Activated CD4-positive, alpha-beta T cell treated with anti-CD3 and anti-CD28 coated beads for 36 hours (primary cell): ENCODE measurements at regions of chr19 and their contacts with region 1.

Region 1: DNA sequence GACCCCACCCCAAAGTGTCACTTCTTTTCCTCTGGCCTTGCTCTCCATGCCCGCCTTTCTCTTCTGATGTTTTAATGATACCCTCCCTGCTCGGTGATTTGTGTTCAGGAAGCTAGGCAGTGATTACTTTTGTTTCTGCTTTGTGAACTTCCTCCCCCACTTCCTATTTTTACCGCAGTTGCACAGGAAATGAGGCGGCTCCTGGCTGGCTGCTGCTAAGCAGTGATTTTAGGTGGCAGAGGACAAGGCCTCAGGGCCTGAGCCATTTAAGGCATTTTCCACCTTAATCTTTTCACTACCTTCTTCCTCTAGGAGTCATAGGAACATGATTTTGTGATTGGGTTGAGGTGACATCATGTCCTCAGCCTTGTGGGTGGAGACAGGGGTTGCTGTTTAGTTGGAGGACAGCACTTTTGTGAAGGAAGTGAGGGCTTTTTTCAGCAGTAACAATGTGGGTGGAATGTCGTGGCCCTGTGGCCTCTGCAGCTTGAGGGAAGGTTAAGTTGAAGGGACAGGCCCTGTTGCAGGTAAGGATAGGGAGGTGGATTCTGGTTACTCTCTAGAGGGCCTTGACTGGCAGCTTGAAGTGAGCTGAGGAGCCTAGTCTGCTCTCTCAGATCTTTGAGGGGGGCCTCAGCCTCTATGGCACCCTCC is 15.7 kb downstream of the GARRE1 start:
- DNase-seq: peak; percentile 82
- ATAC-seq: peak; percentile 90
- H3K4me3 Mint-ChIP-seq: peak overlapping the region; percentile 53
- H3K27ac Mint-ChIP-seq: peak overlapping the region; percentile 95
- H3K4me1 Mint-ChIP-seq: peaks cover 72% of the 10 kb centered on the region
- H3K27me3 Mint-ChIP-seq: no peaks in the 10 kb centered on the region

Region 2: DNA sequence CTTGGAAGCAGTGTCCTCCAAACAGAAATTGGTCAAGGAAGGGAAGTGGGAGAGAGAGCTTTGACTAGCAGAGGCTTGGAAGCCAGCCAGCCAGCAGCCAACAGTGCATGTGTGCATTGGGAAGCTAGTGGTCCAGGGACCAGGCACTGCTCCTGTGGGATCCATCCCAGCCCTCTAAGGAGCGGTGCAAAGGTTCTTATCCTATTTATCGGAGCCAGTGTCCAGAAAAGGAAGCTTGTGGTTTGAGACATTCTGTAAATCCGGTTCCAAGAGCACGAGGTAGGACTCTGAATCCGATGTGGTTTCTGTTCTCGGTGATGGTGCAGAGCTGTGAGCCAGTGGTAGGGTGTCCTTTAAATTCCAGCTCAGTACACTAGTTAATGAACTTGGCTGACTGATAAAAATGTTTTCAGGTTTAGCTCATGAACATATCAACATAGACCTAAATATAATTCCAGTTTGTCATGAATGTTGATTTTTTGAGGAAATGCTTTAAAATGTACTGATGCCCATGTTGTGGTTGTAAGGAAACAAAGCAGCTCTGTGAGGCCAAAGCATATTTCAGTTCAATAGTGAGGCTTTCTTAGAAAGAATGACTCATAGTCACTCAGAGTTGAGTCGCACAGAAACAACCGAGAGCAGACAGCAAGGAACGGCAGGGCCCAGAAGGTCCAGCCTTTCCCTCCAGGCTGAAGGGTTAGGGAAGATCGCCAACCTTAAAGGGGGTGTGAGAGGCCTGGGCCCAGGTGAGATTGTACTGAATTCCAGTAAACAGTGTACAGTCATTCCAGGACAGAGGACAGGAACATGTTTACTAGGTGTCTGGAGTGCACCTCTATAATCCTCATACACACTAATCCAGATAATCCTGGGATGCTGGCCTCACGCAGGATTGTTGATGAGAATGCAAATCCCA is 37.3 kb before region 1 on chr19:
- CTCF ChIA-PET with region 1: no interaction called
- POLR2A ChIA-PET with region 1: interaction called, 3 read pairs
- intact Hi-C with region 1: loop called in 1 of 2 experiments (anchors 2 kb)
- DNase-seq: peak; percentile 53
- ATAC-seq: peak; percentile 87
- H3K4me3 Mint-ChIP-seq: no peak overlapping the region
- H3K27ac Mint-ChIP-seq: peak overlapping the region; percentile 80
- H3K4me1 Mint-ChIP-seq: peaks cover 31% of the 10 kb centered on the region
- H3K27me3 Mint-ChIP-seq: no peaks in the 10 kb centered on the region

Region 3: GRCh38 chr19:34253699-34254551 is 16.2 kb before region 1 on chr19:
- CTCF ChIA-PET with region 1: interaction called, 3 read pairs
- POLR2A ChIA-PET with region 1: interaction called, 4 read pairs
- intact Hi-C with region 1: loop called (anchors 1 to 2 kb)
- DNase-seq: no peak
- ATAC-seq: peak; percentile 24
- H3K4me3 Mint-ChIP-seq: peak overlapping the region; percentile 81
- H3K27ac Mint-ChIP-seq: peak overlapping the region; percentile 98
- H3K4me1 Mint-ChIP-seq: peaks cover 30% of the 10 kb centered on the region
- H3K27me3 Mint-ChIP-seq: no peaks in the 10 kb centered on the region

Region 4: GRCh38 chr19:34288381-34288780 is 18.3 kb after region 1 on chr19:
- CTCF ChIA-PET with region 1: interaction called, 5 read pairs
- POLR2A ChIA-PET with region 1: no interaction called
- intact Hi-C with region 1: loop called (anchors 1 to 2 kb)
- DNase-seq: peak; percentile 56
- ATAC-seq: peak; percentile 80
- H3K4me3 Mint-ChIP-seq: no peak overlapping the region
- H3K27ac Mint-ChIP-seq: peak overlapping the region; percentile 71
- H3K4me1 Mint-ChIP-seq: peaks cover 24% of the 10 kb centered on the region
- H3K27me3 Mint-ChIP-seq: no peaks in the 10 kb centered on the region

Region 5: GRCh38 chr19:34308381-34309367 is 38.6 kb after region 1 on chr19:
- CTCF ChIA-PET with region 1: no interaction called
- POLR2A ChIA-PET with region 1: no interaction called
- intact Hi-C with region 1: loop called in 1 of 2 experiments (anchors 2 kb)
- DNase-seq: peak; percentile 32
- ATAC-seq: peak; percentile 21
- H3K4me3 Mint-ChIP-seq: peak overlapping the region; percentile 20
- H3K27ac Mint-ChIP-seq: peak overlapping the region; percentile 90
- H3K4me1 Mint-ChIP-seq: peaks cover 69% of the 10 kb centered on the region
- H3K27me3 Mint-ChIP-seq: no peaks in the 10 kb centered on the region

Region 6: GRCh38 chr19:34317311-34317927 is 47.3 kb after region 1 on chr19:
- CTCF ChIA-PET with region 1: interaction called, 3 read pairs
- POLR2A ChIA-PET with region 1: no interaction called
- intact Hi-C with region 1: loop called in 1 of 2 experiments (anchors 5 kb)
- DNase-seq: peak; percentile 38
- ATAC-seq: peak; percentile 78
- H3K4me3 Mint-ChIP-seq: no peak overlapping the region
- H3K27ac Mint-ChIP-seq: peak overlapping the region; percentile 81
- H3K4me1 Mint-ChIP-seq: peaks cover 57% of the 10 kb centered on the region
- H3K27me3 Mint-ChIP-seq: no peaks in the 10 kb centered on the region

Region 7: GRCh38 chr19:34351382-34351826 is 81.3 kb after region 1 on chr19:
- CTCF ChIA-PET with region 1: interaction called, 6 read pairs
- POLR2A ChIA-PET with region 1: no interaction called
- intact Hi-C with region 1: loop called in 1 of 2 experiments (anchors 2 kb)
- DNase-seq: peak; percentile 21
- ATAC-seq: no peak
- H3K4me3 Mint-ChIP-seq: no peak overlapping the region
- H3K27ac Mint-ChIP-seq: peak overlapping the region; percentile 72
- H3K4me1 Mint-ChIP-seq: peaks cover 17% of the 10 kb centered on the region
- H3K27me3 Mint-ChIP-seq: no peaks in the 10 kb centered on the region

Region 8: DNA sequence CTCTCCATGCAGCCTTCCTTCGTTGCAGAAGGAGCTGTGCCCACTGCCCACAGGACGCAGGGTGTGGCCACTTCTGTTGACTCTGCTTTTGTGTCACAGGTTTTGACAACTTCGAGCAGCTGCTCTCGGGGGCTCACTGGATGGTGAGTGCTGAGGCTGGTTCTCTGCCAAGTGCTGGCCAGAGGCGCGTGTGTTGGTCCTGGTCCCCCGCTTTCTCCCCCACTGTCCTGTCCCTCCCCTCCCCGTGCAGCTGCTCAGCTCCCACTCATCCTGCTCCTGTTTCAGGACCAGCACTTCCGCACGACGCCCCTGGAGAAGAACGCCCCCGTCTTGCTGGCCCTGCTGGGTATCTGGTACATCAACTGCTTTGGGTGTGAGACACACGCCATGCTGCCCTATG is 123.5 kb after region 1 on chr19:
- CTCF ChIA-PET with region 1: no interaction called
- POLR2A ChIA-PET with region 1: no interaction called
- intact Hi-C with region 1: no loop called
- DNase-seq: no peak
- ATAC-seq: no peak
- H3K4me3 Mint-ChIP-seq: no peak overlapping the region
- H3K27ac Mint-ChIP-seq: no peak overlapping the region
- H3K4me1 Mint-ChIP-seq: no peaks in the 10 kb centered on the region
- H3K27me3 Mint-ChIP-seq: no peaks in the 10 kb centered on the region